Activated CD8-positive, alpha-beta T cell treated with anti-CD3 and anti-CD28 coated beads for 36 hours (primary cell): ENCODE measurements at regions of chr12 and their contacts with region 1.

Region 1: DNA sequence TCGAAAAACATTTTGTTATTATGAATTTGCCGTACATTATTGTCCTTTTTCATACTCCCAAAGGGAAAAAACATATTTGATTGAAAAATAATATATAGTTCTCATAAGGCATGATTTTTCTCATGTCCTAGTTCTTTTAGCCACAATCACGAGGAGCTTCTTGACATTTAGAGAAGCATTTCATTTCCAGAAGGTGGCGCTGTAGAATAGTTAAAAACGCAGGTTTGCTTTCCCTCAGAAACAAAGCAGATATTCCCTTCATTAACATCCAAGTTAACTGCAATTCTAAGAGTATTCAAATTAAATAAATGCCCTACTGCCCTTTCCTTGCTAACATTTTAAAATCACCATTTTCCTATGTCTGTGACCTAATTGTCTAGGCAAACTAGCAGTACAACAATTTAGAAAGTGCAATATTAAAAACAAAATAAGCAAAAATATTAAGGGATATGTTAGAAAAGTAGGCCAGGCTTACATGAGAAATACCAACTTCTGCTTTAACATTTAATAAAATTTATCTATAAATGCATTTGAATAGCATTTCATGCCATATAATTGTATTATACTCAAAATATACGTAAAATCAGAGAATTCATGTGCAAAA is 10.9 kb upstream of the PIK3C2G start:
- DNase-seq: peak; percentile 2
- ATAC-seq: no peak
- H3K4me3 Mint-ChIP-seq: no peak overlapping the region
- H3K27ac Mint-ChIP-seq: no peak overlapping the region
- H3K4me1 Mint-ChIP-seq: no peaks in the 10 kb centered on the region
- H3K27me3 Mint-ChIP-seq: no peaks in the 10 kb centered on the region
- CTCF ChIP-seq: peak; percentile 65

Region 2: DNA sequence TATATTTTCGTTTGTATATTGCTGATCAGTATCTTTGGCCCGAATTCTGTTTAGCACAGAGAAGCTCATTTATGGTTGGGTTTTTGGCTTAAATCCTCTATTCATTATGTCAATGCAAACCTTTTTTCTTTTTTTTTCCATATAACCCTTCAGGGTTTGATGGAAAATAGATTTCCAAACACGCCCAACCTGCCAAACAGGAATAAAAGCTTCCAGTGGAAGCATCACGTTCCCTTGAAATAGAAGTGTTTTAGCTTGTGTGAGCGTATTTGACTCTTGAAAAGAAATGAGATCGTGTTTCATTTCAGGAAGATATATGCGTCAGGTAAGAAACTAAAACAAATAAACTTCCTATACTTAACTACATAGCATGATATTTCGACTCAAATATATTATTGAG is 10.8 kb after region 1 on chr12 and contains the start of gene PIK3C2G:
- CTCF ChIA-PET with region 1: interaction called, 12 read pairs
- POLR2A ChIA-PET with region 1: no interaction called
- intact Hi-C with region 1: no loop called
- DNase-seq: no peak
- ATAC-seq: no peak
- H3K4me3 Mint-ChIP-seq: no peak within 1 kb of the TSS
- H3K27ac Mint-ChIP-seq: no peak within 1 kb of the TSS
- H3K4me1 Mint-ChIP-seq: no peaks in the 10 kb centered on the region
- H3K27me3 Mint-ChIP-seq: no peaks in the 10 kb centered on the region
- CTCF ChIP-seq: no peak
- total RNA-seq, gene PIK3C2G: not detected

Region 3: DNA sequence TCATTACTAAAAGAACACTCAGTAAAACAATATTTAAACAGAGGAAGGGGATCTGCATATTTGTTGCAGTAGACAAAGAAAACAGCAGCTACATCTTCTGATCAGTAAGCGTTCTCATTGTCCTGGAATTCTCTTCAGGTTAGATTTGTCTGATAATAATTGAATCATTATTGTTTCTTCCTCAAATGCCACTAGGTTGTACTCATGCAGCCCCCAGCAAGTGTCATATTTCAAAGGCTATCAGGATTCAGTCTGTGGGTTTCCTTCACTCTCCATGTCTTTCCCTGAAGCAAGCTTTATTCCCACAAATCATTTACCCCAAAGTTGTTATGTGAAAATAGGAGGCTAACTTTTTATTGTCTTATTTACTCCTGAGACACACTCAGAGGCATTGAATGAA is 25.6 kb after region 1 on chr12:
- CTCF ChIA-PET with region 1: no interaction called
- POLR2A ChIA-PET with region 1: no interaction called
- intact Hi-C with region 1: no loop called
- DNase-seq: no peak
- ATAC-seq: no peak
- H3K4me3 Mint-ChIP-seq: no peak overlapping the region
- H3K27ac Mint-ChIP-seq: no peak overlapping the region
- H3K4me1 Mint-ChIP-seq: no peaks in the 10 kb centered on the region
- H3K27me3 Mint-ChIP-seq: no peaks in the 10 kb centered on the region
- CTCF ChIP-seq: no peak

Region 4: DNA sequence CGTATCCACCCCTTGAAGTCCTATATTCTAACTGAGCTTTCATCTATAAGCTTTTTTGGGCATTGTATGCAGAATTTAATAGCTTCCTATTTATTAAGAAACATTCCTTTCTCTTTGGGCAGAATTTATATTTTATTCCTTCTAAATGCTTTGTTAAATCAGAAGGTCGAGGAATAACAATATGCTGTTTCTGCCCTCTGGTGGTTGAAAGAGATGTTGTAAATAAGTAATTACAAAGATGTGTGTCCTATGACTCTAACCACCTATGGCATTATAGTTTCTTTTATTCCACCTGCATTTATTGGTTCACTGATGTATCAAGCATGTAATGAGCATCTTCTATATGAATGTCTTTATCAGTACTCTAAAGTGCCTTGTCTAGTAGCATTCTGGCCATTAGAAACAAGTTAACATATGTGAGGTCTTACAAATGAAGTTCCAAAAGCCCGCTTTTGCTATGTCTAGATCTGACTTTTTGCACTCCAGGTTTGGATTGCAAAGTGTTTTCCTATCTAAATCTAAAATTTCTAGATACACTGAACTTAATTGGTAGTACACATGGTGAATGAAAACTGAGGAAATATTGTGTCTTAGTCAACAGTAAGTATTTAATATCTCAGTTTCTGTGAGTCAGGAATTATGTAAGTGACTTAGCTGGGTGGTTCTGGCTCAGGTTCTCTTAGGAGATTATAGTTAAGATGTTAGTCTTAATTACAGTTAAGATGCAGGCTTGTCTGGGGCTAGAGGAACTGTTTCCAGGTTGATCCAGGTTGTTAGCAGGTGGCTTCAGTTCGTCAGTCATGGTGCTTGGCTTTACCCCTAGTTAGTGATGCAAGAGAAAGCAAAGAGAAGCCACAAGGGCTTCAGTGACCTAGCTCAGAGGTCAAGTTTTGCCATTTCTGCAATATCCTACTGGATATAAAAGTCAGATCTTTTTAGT is 936.6 kb after region 1 on chr12:
- CTCF ChIA-PET with region 1: interaction called, 6 read pairs
- POLR2A ChIA-PET with region 1: no interaction called
- intact Hi-C with region 1: loop called (anchors 10 kb)
- DNase-seq: no peak
- ATAC-seq: no peak
- H3K4me3 Mint-ChIP-seq: no peak overlapping the region
- H3K27ac Mint-ChIP-seq: no peak overlapping the region
- H3K4me1 Mint-ChIP-seq: peaks cover 6% of the 10 kb centered on the region
- H3K27me3 Mint-ChIP-seq: no peaks in the 10 kb centered on the region
- CTCF ChIP-seq: peak; percentile 74

Region 5: DNA sequence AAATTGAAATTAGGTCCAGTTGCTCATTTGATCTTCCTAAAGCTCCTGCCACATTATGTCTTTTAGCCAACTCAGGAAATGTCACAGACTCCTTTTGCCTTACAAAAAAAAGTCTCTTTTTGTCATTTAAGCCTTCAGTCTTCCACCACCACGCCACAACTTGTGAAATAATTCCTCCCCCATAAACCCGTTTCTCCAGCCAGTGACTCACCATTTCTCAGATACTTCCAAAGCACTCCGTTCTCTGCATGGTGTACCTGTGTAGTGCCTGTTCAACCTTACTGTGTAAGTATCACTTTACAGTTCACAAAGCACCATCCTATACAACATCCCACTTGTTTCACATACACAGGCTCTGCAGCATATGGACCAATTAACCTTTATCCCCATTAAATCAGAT is 1049.3 kb after region 1 on chr12:
- CTCF ChIA-PET with region 1: interaction called, 3 read pairs
- POLR2A ChIA-PET with region 1: no interaction called
- intact Hi-C with region 1: loop called (anchors 10 kb)
- DNase-seq: no peak
- ATAC-seq: no peak
- H3K4me3 Mint-ChIP-seq: no peak overlapping the region
- H3K27ac Mint-ChIP-seq: no peak overlapping the region
- H3K4me1 Mint-ChIP-seq: no peaks in the 10 kb centered on the region
- H3K27me3 Mint-ChIP-seq: no peaks in the 10 kb centered on the region
- CTCF ChIP-seq: no peak